ENCODE measurements at regions of chr6 and their contacts with region 1.

Region 1: GRCh38 chr6:108655806-108656651 is 95.3 kb downstream of the FOXO3 start:
- DNase-seq: peak in 1 of 2 donors; percentile 40
- H3K4me3 ChIP-seq: peak overlapping the region; percentile 17 to 40
- H3K27ac ChIP-seq: peak overlapping the region; percentile 80 to 85
- H3K4me1 ChIP-seq: peaks cover 0 to 100% (median 85%) of the 10 kb centered on the region in 4 donors
- H3K27me3 ChIP-seq: no peaks in the 10 kb centered on the region
- CTCF ChIP-seq: no peak

Region 2: GRCh38 chr6:108609276-108609769 is 46.7 kb before region 1 on chr6:
- intact Hi-C with region 1: loop called (anchors 10 kb)
- DNase-seq: peak in 1 of 2 donors; percentile 30
- H3K4me3 ChIP-seq: no peak overlapping the region
- H3K27ac ChIP-seq: peak overlapping the region; percentile 71
- H3K4me1 ChIP-seq: peaks cover 0 to 92% (median 66%) of the 10 kb centered on the region in 4 donors
- H3K27me3 ChIP-seq: no peaks in the 10 kb centered on the region
- CTCF ChIP-seq: no peak